ENCODE measurements at regions of chr2 and their contacts with region 1.

Region 1: DNA sequence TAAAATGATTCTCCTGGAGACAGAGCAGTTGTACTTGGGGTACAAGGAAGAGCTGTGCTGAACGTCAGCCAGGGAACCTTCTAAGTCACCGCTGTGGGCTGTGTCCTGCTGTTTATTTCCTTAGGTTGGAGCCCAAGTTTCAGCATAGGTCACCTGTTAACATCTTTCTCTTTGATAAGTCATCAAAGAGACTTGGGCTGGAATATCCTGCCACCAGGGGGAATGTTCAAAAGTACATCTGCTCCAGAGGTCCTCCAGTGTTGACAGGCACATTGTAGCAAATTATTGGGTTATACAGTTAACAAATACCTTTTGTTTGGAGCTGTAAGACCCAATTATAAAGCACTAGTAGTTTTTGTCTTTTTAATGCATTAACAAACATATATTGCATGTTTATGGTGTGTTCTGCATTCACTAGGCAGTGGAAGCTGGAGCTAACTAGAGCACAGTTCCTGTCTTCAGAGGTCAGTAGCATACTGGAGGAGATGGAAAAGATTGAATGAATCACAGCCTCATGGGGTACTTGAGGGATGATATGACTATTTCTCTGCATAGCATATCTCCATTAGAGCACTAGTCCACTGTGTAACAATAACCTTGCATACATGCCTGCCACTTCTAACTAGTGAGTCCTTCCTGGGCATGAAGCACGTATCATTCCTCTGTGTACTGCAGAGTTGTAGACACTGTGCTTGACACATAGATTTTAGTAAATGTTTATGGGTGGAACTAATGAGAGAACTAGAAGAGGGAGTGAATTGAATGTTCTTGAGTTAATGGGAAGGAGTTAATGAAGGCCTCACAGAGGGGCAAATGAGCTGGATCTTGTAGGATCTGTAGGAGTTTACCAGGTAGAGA is 182.1 kb downstream of the AGAP1 start:
- DNase-seq: peak in 1 of 2 experiments; percentile 11
- H3K4me3 ChIP-seq: no peak overlapping the region
- H3K4me3 Mint-ChIP-seq: no peak overlapping the region
- H3K27ac Mint-ChIP-seq: peak overlapping the region; percentile 89
- H3K4me1 ChIP-seq: peaks cover 36% of the 10 kb centered on the region
- H3K4me1 Mint-ChIP-seq: peaks cover 23% of the 10 kb centered on the region
- H3K27me3 ChIP-seq: no peaks in the 10 kb centered on the region
- H3K27me3 Mint-ChIP-seq: no peaks in the 10 kb centered on the region
- CTCF ChIP-seq: peak in 1 of 2 experiments; percentile 18

Region 2: DNA sequence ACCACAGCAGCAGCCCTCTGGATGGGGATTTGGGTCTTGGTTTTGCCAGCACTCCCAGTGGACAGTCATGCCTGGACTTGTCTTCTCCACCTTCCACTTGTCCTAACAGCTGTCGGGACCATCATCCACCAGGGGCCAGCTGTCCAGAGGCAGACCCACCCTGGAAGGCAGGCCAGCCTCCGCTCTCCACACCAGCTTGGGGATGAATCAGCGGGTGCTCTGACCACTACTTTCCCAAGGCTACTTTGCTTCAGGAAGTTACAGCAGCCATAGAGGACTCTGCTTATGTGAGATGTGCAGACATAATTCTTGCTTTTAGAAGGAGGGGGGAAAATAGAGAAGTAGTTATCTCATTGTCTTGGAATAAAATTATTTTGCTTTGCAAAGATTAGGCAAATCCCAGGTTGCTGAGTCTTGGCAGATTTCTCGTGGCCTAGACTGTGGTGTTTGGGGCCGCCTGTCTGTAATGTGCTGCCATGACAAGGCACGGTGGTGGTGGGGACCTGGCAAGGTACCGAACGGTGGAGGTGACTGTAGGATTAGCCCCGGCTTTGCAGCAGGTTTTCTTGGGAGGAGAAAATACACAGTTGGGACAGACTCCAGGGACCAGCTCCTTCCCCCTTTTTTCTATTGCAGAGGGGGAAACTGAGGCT is 33.3 kb before region 1 on chr2:
- CTCF ChIA-PET with region 1: no interaction called
- POLR2A ChIA-PET with region 1: no interaction called
- intact Hi-C with region 1: no loop called
- DNase-seq: no peak
- H3K4me3 ChIP-seq: no peak overlapping the region
- H3K4me3 Mint-ChIP-seq: no peak overlapping the region
- H3K27ac Mint-ChIP-seq: no peak overlapping the region
- H3K4me1 ChIP-seq: no peaks in the 10 kb centered on the region
- H3K4me1 Mint-ChIP-seq: peaks cover 7% of the 10 kb centered on the region
- H3K27me3 ChIP-seq: no peaks in the 10 kb centered on the region
- H3K27me3 Mint-ChIP-seq: no peaks in the 10 kb centered on the region
- CTCF ChIP-seq: no peak

Region 3: DNA sequence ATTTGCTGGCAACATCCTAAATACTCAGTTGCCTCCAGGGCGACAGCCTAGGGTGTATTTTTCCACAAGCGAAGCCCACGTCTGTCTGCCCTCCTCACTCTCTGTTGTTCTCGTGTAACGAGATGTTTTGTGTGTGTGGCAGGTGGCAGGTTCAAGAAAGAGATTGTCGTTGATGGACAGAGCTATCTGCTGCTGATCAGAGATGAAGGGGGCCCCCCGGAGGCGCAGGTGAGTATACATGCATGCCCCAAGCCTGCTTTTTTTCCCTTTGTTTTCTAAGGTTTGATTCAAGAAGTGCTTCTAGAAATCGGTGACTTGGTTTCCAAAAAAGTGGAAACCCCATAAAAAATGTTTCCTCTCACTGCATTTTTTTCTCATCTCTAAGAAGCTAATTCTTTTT is 64.9 kb after region 1 on chr2:
- CTCF ChIA-PET with region 1: interaction called, 5 read pairs
- POLR2A ChIA-PET with region 1: no interaction called
- intact Hi-C with region 1: loop called (anchors 5 kb)
- DNase-seq: peak; percentile 41 to 54
- H3K4me3 ChIP-seq: no peak overlapping the region
- H3K4me3 Mint-ChIP-seq: no peak overlapping the region
- H3K27ac Mint-ChIP-seq: no peak overlapping the region
- H3K4me1 ChIP-seq: no peaks in the 10 kb centered on the region
- H3K4me1 Mint-ChIP-seq: no peaks in the 10 kb centered on the region
- H3K27me3 ChIP-seq: no peaks in the 10 kb centered on the region
- H3K27me3 Mint-ChIP-seq: no peaks in the 10 kb centered on the region
- CTCF ChIP-seq: peak; percentile 22 to 52

Measured in Caco-2 (cell line).